Vagina (tissue), 2 donors: ENCODE measurements at regions of chr1 and their contacts with region 1.

Region 1: GRCh38 chr1:61379693-61380092 is 297.3 kb downstream of the NFIA start:
- DNase-seq: no peak
- H3K4me3 ChIP-seq: no peak overlapping the region
- H3K27ac ChIP-seq: no peak overlapping the region
- H3K4me1 ChIP-seq: no peaks in the 10 kb centered on the region
- H3K27me3 ChIP-seq: no peaks in the 10 kb centered on the region
- CTCF ChIP-seq: no peak
- POLR2A ChIP-seq: no peak

Region 2: DNA sequence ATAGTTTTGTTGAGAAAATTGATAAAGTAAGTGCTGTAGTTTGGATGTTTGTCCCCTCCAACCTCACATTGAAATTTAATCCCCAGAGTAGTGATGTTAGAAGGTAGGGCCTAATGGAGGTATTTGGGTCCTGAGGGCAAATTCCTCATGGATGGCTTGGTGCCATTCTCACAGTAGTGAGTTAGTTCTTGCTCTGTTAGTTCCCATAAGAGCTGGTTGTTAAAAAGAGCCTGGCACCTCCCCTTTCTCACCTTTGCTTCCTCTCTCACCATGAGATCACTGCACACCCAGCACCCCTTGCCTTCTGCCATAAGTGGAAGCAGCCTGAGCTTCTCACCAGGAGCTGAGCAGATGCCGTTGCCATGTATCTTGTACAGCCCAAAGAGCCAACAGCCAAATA is 652.1 kb before region 1 on chr1:
- intact Hi-C with region 1: loop called (anchors 5 kb)
- DNase-seq: no peak
- H3K4me3 ChIP-seq: no peak overlapping the region
- H3K27ac ChIP-seq: no peak overlapping the region
- H3K4me1 ChIP-seq: no peaks in the 10 kb centered on the region
- H3K27me3 ChIP-seq: no peaks in the 10 kb centered on the region
- CTCF ChIP-seq: no peak
- POLR2A ChIP-seq: no peak